PC-9 (cell line): ENCODE measurements at regions of chr2 and their contacts with region 1.

Region 1: GRCh38 chr2:64865073-64865830 is 123.9 kb upstream of the SLC1A4 start:
- DNase-seq: peak; percentile 46 to 74
- H3K4me3 ChIP-seq: peak overlapping the region; percentile 89
- H3K27ac ChIP-seq: peak overlapping the region; percentile 74
- H3K4me1 ChIP-seq: peaks cover 39% of the 10 kb centered on the region
- H3K27me3 ChIP-seq: no peaks in the 10 kb centered on the region
- CTCF ChIP-seq: no peak; the same call in 1 of the 2 replicates

Region 2: GRCh38 chr2:64644177-64645004 is 220.9 kb before region 1 on chr2:
- CTCF ChIA-PET with region 1: interaction called, 6 read pairs
- POLR2A ChIA-PET with region 1: interaction called, 9 read pairs
- intact Hi-C with region 1: loop called (anchors 1 kb)
- DNase-seq: peak; percentile 83 to 85
- H3K4me3 ChIP-seq: peak overlapping the region; percentile 60
- H3K27ac ChIP-seq: peak overlapping the region; percentile 97
- H3K4me1 ChIP-seq: peaks cover 78% of the 10 kb centered on the region
- H3K27me3 ChIP-seq: no peaks in the 10 kb centered on the region
- CTCF ChIP-seq: no peak

Region 3: GRCh38 chr2:64807417-64807816 is 57.8 kb before region 1 on chr2:
- CTCF ChIA-PET with region 1: no interaction called
- POLR2A ChIA-PET with region 1: no interaction called
- intact Hi-C with region 1: loop called (anchors 2 kb)
- DNase-seq: peak; percentile 74 to 91
- H3K4me3 ChIP-seq: no peak overlapping the region
- H3K27ac ChIP-seq: no peak overlapping the region
- H3K4me1 ChIP-seq: peaks cover 12% of the 10 kb centered on the region
- H3K27me3 ChIP-seq: no peaks in the 10 kb centered on the region
- CTCF ChIP-seq: no peak

Region 4: GRCh38 chr2:64888591-64889309 is 23.5 kb after region 1 on chr2:
- CTCF ChIA-PET with region 1: no interaction called
- POLR2A ChIA-PET with region 1: interaction called, 5 read pairs
- intact Hi-C with region 1: loop called (anchors 1 kb)
- DNase-seq: peak; percentile 80 to 92
- H3K4me3 ChIP-seq: no peak overlapping the region
- H3K27ac ChIP-seq: no peak overlapping the region
- H3K4me1 ChIP-seq: peaks cover 8% of the 10 kb centered on the region
- H3K27me3 ChIP-seq: no peaks in the 10 kb centered on the region
- CTCF ChIP-seq: peak; percentile 79

Region 5: GRCh38 chr2:64998658-64999061 is 133.4 kb after region 1 on chr2:
- CTCF ChIA-PET with region 1: no interaction called
- POLR2A ChIA-PET with region 1: no interaction called
- intact Hi-C with region 1: no loop called
- DNase-seq: no peak
- H3K4me3 ChIP-seq: no peak overlapping the region
- H3K27ac ChIP-seq: no peak overlapping the region
- H3K4me1 ChIP-seq: no peaks in the 10 kb centered on the region
- H3K27me3 ChIP-seq: no peaks in the 10 kb centered on the region
- CTCF ChIP-seq: no peak